ENCODE measurements at regions of chr10 and their contacts with region 1.

Region 1: DNA sequence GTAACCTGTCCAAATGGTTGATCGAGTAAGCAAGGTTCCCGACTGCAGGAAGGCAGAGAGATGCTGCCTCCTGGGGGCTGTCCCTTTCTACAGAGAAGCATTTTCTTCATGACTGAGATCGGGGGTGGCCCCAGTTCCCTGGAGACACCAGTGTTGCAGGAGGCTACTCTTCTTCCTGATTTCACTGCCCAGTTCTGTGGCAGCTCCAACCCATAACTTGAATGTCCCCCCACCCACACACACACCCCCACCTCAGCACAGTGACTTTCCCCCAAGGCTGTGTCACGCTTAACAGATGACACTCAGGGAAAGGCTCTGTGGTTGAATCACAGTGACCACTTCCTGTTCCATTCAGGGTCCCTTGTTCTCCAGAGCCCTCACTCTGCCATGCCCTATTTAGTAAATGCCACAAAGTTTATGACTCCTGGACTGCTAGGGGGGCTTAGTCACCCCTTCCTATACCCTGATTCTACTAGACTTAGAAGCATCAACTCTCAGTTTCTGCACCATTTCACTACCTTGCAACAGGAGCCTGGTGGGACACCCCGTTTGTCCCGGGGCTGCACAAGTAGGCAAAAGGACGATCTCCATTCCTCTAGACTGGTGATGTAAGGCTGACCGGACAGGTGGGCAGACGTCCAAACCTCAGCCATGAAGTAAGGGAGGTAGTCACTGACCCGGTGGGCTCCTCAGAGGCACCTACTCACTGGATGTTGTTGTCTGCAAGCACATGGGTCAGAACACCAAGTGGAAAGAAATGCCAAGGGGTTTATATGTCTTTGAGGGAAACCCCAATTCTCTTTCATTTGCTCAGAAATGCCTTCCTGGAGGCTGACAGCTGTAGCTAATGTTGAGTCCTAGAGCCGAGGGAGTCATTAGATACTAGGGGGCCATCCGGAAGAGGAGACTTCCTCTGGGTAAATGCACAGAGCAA is 31.3 kb upstream of the SMC3 start:
- DNase-seq: peak; percentile 90
- H3K4me3 Mint-ChIP-seq: no peak overlapping the region
- H3K27ac Mint-ChIP-seq: peak overlapping the region; percentile 54
- H3K4me1 Mint-ChIP-seq: peaks cover 22% of the 10 kb centered on the region
- H3K27me3 Mint-ChIP-seq: no peaks in the 10 kb centered on the region

Region 2: GRCh38 chr10:110324201-110324804 is 211.9 kb before region 1 on chr10:
- CTCF ChIA-PET with region 1: no interaction called
- intact Hi-C with region 1: loop called (anchors 1 kb)
- DNase-seq: no peak
- H3K4me3 Mint-ChIP-seq: no peak overlapping the region
- H3K27ac Mint-ChIP-seq: peak overlapping the region; percentile 84
- H3K4me1 Mint-ChIP-seq: peaks cover 37% of the 10 kb centered on the region
- H3K27me3 Mint-ChIP-seq: peaks cover 2% of the 10 kb centered on the region

Region 3: DNA sequence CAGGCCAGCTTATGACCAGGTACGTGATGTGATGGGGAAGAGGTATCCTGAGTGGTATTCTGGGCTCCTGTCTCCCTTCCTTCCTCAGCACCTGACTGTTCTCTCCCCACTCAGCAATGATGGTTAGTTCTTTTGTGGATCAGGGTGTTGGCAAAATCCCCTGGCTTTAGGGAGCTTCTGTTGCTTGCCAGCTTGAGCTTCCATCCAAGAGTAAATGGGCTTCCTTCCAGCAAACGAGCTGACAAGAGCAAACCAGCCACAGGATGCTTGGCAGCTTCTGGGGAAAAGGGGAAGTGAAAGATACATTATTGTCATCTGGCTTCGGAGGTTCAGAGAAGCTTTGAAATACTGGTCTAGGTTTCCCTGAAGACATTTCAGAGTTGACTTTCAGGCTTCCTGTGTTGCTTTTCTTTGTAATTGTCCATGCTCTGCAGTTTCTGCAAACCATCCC is 33.3 kb before region 1 on chr10:
- CTCF ChIA-PET with region 1: interaction called, 6 read pairs
- intact Hi-C with region 1: loop called (anchors 1 kb)
- DNase-seq: peak; percentile 66
- H3K4me3 Mint-ChIP-seq: peak overlapping the region; percentile 97
- H3K27ac Mint-ChIP-seq: peak overlapping the region; percentile 85
- H3K4me1 Mint-ChIP-seq: peaks cover 74% of the 10 kb centered on the region
- H3K27me3 Mint-ChIP-seq: no peaks in the 10 kb centered on the region

Region 4: DNA sequence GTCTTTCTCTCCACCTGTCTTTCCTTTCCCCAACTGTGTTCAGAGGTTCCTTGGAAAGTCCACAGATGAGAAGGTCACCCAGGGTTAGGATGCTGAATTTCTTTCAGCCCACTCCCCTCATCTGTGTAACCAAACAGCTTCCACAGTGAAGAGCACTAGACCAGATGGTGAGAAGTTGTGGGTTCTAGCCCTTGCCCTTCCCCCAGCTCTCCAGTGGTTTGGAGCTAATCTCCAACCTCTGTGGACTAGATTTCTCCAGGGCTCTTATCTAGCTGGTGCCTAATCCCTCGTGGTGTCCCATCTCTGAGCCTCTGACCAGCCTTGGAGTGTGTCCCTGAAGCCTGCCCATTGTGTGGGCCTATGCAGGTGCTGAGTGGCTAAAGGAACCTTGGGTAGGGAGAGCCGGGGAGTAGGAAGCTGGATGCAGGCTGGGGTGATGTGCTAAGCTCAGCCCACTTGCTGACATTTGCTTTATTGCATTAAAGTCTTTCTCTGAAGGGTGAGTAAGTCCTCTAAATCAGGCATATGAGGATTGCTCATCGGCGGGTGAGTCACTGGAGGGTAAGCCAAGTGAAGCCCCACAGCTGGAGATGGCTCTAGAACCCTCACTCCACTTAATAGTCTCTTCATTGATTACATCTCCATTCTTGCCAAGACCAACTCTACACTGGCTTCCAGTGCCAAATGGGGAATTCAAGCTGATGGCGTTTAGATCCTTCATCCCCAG is 23.6 kb before region 1 on chr10:
- CTCF ChIA-PET with region 1: interaction called, 5 read pairs
- intact Hi-C with region 1: loop called (anchors 1 kb)
- DNase-seq: peak; percentile 86
- H3K4me3 Mint-ChIP-seq: no peak overlapping the region
- H3K27ac Mint-ChIP-seq: peak overlapping the region; percentile 80
- H3K4me1 Mint-ChIP-seq: peaks cover 51% of the 10 kb centered on the region
- H3K27me3 Mint-ChIP-seq: no peaks in the 10 kb centered on the region